HCT116 (cell line): ENCODE measurements at regions of chr1 and their contacts with region 1.

Region 1: DNA sequence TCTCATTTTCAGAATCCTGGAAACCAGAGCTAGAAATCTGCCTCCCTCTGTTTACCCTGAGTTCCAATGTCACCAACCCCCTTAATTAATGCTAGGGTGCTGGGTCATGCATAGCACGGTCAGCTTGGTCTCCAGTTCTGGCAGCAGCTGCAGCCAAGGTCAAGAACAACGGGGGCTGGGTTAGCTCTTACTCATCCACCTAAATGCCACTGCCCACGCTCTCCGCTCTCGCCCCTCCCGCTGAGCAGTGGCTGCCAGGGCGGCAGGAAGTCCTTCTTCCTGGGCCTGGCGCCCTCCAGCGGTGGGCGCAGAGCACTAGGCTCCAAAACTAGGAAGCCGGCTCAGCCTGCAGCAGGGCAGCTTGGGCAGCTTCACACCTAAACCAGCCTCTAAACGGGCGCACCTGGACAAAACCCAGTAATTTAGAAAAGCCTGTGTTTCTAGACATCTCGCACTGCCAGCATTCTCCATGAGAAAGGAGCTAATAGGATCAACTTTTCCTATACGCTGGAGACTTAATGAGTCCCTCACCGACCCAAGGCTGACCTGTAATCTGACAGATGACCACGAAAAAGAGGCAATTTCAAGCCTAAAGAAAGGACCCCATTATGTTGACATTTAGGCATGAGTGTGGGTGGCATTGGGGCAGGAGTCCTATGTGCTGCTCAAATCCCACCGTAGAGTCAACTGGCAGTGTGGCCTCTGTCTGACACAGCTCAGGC is 78.3 kb upstream of the LRRN2 start:
- DNase-seq: peak; percentile 52
- ATAC-seq: peak; percentile 99
- H3K4me3 ChIP-seq: no peak overlapping the region; a peak in 1 of 4 replicates
- H3K27ac ChIP-seq: no peak overlapping the region
- H3K4me1 ChIP-seq: peaks cover 8 to 26% of the 10 kb centered on the region in 2 experiments; a peak in 3 of 4 replicates
- H3K27me3 ChIP-seq: peaks cover 9% of the 10 kb centered on the region; the same call in 1 of the 2 replicates
- CTCF ChIP-seq: peak; percentile 91 to 95 (median 94)
- POLR2A ChIP-seq: no peak
- RAD21 ChIP-seq: peak; percentile 88

Region 2: DNA sequence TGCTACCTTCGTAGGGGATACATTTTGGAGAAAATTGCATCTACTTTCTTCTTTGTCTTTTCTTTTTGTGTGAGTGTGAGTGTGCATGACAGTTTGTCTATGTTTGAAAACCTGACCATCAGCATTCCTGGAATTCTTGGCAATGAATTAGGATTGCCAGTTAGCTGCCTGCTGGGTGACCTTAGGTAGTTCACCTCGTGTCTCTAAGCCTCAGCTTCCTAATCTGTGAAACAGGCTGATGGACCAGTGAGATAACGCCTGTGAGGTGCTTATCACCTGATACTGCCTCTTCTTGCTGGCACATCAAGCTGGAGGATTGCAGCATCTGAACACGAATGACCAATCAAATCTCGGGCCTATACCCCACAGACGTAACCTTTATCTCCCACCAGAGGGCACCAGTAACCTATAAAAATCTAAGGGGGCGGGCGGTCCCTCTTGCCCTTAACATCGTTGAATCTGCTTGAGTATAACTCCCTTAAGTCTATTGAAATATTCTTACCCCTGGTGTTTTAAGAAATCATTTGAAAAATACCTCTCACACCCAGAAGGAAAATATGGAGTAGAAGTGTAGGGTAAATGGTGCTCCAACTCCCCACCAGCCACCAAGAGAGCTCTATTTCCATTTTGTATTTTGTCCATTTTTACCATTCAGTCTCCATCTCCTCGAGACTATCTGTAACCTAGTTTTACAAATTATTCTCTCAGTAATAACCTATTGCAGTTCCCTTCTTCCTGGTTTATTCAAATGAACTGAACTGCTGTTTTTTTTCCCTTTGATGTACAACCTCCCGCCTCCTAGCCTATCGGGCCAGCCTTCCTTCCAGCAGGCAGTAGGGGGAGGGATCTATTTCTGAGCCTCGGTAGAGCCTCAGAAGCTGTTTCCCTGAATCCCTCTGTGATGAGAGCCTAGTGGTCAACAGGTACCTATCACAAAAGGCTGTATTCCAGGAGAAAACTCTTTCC is 198.0 kb before region 1 on chr1:
- CTCF ChIA-PET with region 1: interaction called, 27 read pairs
- POLR2A ChIA-PET with region 1: no interaction called
- RAD21 ChIA-PET with region 1: interaction called, 4 to 9 read pairs
- intact Hi-C with region 1: loop called (anchors 2 kb)
- DNase-seq: peak; percentile 68
- ATAC-seq: peak; percentile 83
- H3K4me3 ChIP-seq: 0 out of 4 replicates have a peak overlapping the region, but pooled peaks of 1 of the 2 experiments have one; percentile 2
- H3K27ac ChIP-seq: no peak overlapping the region
- H3K4me1 ChIP-seq: peaks cover 21 to 35% of the 10 kb centered on the region in 2 experiments
- H3K27me3 ChIP-seq: no peaks in the 10 kb centered on the region
- CTCF ChIP-seq: peak; percentile 55 to 96 (median 72)
- POLR2A ChIP-seq: no peak
- RAD21 ChIP-seq: peak; percentile 89

Region 3: DNA sequence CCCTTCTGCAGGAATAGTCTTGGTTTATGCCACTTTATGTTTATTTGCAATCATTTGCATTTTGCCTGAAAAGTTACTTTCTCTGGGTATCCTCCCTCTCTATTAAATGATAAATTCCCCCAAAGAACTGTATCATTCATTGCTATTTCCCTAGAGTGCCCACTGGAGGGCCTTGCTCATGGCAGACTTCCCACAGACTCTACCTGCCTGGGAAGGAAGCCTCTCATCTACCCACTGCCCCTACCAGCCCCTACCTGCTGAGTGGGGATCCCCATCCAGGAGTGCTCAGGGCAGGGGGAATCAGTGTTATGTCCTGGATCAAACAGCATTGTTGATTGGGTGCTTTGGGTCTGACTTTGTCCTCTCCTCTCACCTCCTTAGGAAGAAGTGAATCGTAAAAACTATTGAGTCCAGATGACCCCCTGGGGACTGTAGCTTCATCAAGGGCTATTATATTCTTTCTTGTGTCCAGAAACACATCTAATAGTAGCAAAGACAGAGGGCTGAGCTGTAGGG is 71.5 kb before region 1 on chr1:
- CTCF ChIA-PET with region 1: interaction called, 11 read pairs
- POLR2A ChIA-PET with region 1: no interaction called
- RAD21 ChIA-PET with region 1: interaction called in 1 of 2 experiments, 3 read pairs
- intact Hi-C with region 1: no loop called
- DNase-seq: no peak
- ATAC-seq: peak; percentile 85
- H3K4me3 ChIP-seq: no peak overlapping the region
- H3K27ac ChIP-seq: no peak overlapping the region
- H3K4me1 ChIP-seq: peaks cover 2 to 10% of the 10 kb centered on the region in 2 experiments; a peak in 3 of 4 replicates
- H3K27me3 ChIP-seq: no peaks in the 10 kb centered on the region
- CTCF ChIP-seq: peak; percentile 54 to 61 (median 54); a peak in 5 of 6 replicates
- POLR2A ChIP-seq: no peak
- RAD21 ChIP-seq: peak; percentile 48

Region 4: GRCh38 chr1:204746838-204747442 is 16.9 kb before region 1 on chr1:
- CTCF ChIA-PET with region 1: interaction called, 35 read pairs
- POLR2A ChIA-PET with region 1: interaction called, 5 read pairs
- RAD21 ChIA-PET with region 1: interaction called in 1 of 2 experiments, 4 read pairs
- intact Hi-C with region 1: no loop called
- DNase-seq: peak; percentile 53
- ATAC-seq: peak; percentile 85
- H3K4me3 ChIP-seq: no peak overlapping the region
- H3K27ac ChIP-seq: no peak overlapping the region
- H3K4me1 ChIP-seq: peaks cover 8 to 13% of the 10 kb centered on the region in 2 experiments
- H3K27me3 ChIP-seq: no peaks in the 10 kb centered on the region
- CTCF ChIP-seq: peak; percentile 69 to 98 (median 94)
- POLR2A ChIP-seq: no peak
- RAD21 ChIP-seq: peak; percentile 50

Region 5: DNA sequence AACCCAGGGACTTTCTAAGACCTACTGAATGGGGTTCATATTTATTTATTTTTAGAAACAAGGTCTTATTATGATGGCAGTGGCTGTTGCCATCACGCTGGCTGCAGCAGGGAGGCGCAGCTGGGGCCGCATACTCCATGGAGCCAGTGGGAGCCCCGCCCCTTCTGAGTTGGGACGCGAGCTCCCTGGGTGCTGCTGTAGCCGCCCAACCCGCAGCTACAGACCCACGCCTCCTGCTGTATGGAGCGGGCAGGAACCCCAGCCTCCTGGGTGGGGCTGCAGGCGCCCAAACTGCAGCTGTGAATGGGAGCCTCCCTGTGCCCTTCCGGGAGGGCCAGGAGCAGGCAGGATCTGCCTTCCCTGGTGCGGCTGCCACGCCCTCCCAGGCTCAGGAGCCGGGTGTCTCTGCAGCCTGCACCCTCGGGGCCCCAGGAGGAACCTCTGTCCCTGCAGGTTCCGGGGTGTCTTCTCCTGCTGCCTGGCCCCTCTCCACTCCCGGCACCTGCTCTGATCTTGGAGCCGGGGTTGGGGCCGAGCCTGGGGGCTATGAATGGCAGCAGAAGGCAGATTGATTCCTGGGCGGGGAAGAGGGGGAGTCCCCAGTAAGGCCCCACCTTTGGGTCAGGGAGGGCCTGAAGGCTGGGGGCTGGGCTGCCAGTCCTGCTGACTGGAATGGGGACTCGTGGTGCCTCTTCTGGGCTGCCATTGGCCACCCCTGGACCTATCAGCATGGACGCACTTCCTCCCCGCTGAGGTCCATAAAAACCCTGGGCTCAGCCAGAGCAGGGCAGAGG is 11.8 kb before region 1 on chr1:
- CTCF ChIA-PET with region 1: interaction called, 35 read pairs
- POLR2A ChIA-PET with region 1: interaction called, 5 read pairs
- RAD21 ChIA-PET with region 1: interaction called in 1 of 2 experiments, 4 read pairs
- intact Hi-C with region 1: no loop called
- DNase-seq: peak; percentile 67
- ATAC-seq: peak; percentile 98
- H3K4me3 ChIP-seq: peak overlapping the region; percentile 25 to 43
- H3K27ac ChIP-seq: peak overlapping the region; percentile 42; the same call in 1 of the 2 replicates
- H3K4me1 ChIP-seq: peaks cover 11 to 18% of the 10 kb centered on the region in 2 experiments
- H3K27me3 ChIP-seq: no peaks in the 10 kb centered on the region
- CTCF ChIP-seq: peak; percentile 48 to 57 (median 55); a peak in 5 of 6 replicates
- POLR2A ChIP-seq: no peak
- RAD21 ChIP-seq: peak; percentile 43

Region 6: GRCh38 chr1:204791453-204792353 is 27.8 kb after region 1 on chr1:
- CTCF ChIA-PET with region 1: interaction called, 15 read pairs
- POLR2A ChIA-PET with region 1: no interaction called
- RAD21 ChIA-PET with region 1: no interaction called
- intact Hi-C with region 1: no loop called
- DNase-seq: peak; percentile 72
- ATAC-seq: peak; percentile 99
- H3K4me3 ChIP-seq: no peak overlapping the region
- H3K27ac ChIP-seq: no peak overlapping the region
- H3K4me1 ChIP-seq: 0 out of 4 replicates have a peak, but pooled peaks cover 0 to 5% of the 10 kb centered on the region in 2 experiments
- H3K27me3 ChIP-seq: peaks cover 26% of the 10 kb centered on the region; the same call in 1 of the 2 replicates
- CTCF ChIP-seq: peak; percentile 60 to 97 (median 92); a peak in 5 of 6 replicates
- POLR2A ChIP-seq: no peak
- RAD21 ChIP-seq: peak; percentile 36